ENCODE measurements at regions of chr4 and their contacts with region 1.

Region 1: GRCh38 chr4:132662456-132662855 is 486.6 kb upstream of the PCDH10 start:
- DNase-seq: no peak
- ATAC-seq: no peak
- H3K4me3 Mint-ChIP-seq: no peak overlapping the region
- H3K27ac Mint-ChIP-seq: no peak overlapping the region
- H3K4me1 Mint-ChIP-seq: no peaks in the 10 kb centered on the region
- H3K27me3 Mint-ChIP-seq: no peaks in the 10 kb centered on the region
- CTCF ChIP-seq: no peak

Region 2: DNA sequence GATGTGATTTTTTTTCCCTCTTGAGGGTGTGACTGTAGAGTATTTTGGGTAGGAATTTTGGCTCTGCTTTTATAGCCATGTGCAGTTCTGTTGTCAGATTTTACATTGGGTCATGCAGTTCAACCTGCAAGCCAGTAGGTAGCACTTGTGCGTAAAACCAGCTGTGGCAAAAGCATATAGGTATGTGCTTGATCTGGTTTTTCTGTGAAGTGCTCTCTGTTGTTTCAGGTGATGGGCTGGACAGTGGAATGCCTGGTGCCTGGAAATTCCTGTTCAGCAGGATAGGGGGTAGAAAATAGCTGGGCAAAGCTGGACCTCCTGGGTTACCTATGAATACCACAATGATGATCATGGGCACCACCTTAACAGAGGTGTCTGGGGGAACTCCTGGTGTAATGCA is 97.5 kb before region 1 on chr4:
- CTCF ChIA-PET with region 1: no interaction called
- POLR2A ChIA-PET with region 1: no interaction called
- intact Hi-C with region 1: no loop called
- DNase-seq: no peak
- ATAC-seq: no peak
- H3K4me3 Mint-ChIP-seq: no peak overlapping the region
- H3K27ac Mint-ChIP-seq: no peak overlapping the region
- H3K4me1 Mint-ChIP-seq: no peaks in the 10 kb centered on the region
- H3K27me3 Mint-ChIP-seq: no peaks in the 10 kb centered on the region
- CTCF ChIP-seq: no peak

Region 3: DNA sequence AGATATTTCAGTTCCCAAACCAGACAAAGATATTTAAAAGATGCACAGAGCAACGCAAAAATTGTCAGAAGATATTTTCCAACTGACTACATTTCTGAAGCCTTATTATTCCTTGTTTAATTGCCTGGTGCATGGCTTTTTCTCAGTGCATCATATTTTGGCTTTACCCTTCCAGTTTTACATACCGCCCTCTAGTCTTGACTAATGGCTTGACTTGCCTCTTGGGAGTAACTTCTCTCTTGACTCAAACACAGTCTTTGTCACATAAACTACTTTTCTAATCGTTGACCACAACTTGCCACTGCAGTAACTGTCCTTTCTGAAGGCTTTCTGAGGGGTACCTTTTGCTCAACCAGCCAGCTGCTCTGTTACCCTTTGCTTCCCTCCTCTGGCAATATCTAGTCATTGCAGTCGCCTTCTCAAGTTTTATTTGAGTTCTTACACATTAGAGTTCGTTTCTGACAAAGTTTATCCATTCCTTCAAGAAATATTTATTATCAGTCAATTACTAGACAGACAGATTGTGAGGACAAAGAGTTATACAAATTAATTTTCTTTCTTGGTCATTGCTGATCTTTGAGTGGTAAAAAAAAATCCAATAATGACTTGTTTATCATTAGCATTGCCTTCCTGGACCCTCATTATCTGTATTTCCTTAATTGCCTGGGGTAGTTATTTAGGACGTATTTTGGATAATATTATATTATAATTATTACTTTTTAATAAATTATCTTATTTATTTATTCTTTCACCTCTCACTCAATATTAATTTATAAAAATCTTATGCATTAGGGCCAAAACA is 20.2 kb before region 1 on chr4:
- CTCF ChIA-PET with region 1: no interaction called
- POLR2A ChIA-PET with region 1: no interaction called
- intact Hi-C with region 1: loop called (anchors 1 kb)
- DNase-seq: peak; percentile 10
- ATAC-seq: peak; percentile 47
- H3K4me3 Mint-ChIP-seq: no peak overlapping the region
- H3K27ac Mint-ChIP-seq: no peak overlapping the region
- H3K4me1 Mint-ChIP-seq: no peaks in the 10 kb centered on the region
- H3K27me3 Mint-ChIP-seq: no peaks in the 10 kb centered on the region
- CTCF ChIP-seq: peak; percentile 55